Activated CD8-positive, alpha-beta T cell treated with anti-CD3 and anti-CD28 coated beads for 36 hours (primary cell): ENCODE measurements at regions of chr7 and their contacts with region 1.

Region 1: DNA sequence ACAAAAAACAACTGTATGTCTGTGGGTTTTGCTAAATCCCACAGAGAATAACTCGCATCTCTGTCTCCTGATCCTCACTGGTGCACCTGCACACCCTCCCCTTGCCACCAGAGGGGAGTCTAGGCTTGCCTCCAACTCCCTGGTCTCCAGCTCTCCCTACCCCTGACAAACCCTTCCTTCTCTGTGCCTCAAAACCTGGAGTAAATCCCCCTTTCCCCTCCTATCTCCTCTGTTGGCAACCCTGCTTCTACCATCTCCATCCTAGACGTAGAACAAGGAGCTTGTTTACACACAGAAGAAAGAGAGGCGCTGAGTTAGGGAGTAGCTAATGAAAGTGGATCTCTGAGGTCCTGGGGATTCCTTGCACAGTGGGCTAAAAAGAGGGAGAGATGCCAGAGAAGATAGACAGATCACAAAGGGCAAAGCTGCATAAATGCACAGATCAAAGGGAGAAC is 6.0 kb downstream of the MBLAC1 start:
- DNase-seq: peak; percentile 78
- ATAC-seq: peak; percentile 82
- H3K4me3 Mint-ChIP-seq: no peak overlapping the region
- H3K27ac Mint-ChIP-seq: no peak overlapping the region
- H3K4me1 Mint-ChIP-seq: peaks cover 10% of the 10 kb centered on the region
- H3K27me3 Mint-ChIP-seq: no peaks in the 10 kb centered on the region
- CTCF ChIP-seq: peak; percentile 97

Region 2: GRCh38 chr7:100101016-100101862 is 31.5 kb before region 1 on chr7 and contains the starts of genes AP4M1 and MCM7:
- CTCF ChIA-PET with region 1: interaction called, 18 read pairs
- POLR2A ChIA-PET with region 1: interaction called, 43 read pairs
- intact Hi-C with region 1: no loop called
- DNase-seq: peak; percentile 99
- ATAC-seq: peak; percentile 91
- H3K4me3 Mint-ChIP-seq: peak within 1 kb of the TSS; percentile 91
- H3K27ac Mint-ChIP-seq: peak within 1 kb of the TSS; percentile 95
- H3K4me1 Mint-ChIP-seq: peaks cover 39% of the 10 kb centered on the region
- H3K27me3 Mint-ChIP-seq: no peaks in the 10 kb centered on the region
- CTCF ChIP-seq: no peak
- total RNA-seq, gene AP4M1: 9.8 to 10.9 TPM
- total RNA-seq, gene MCM7: 456 to 476 TPM

Region 3: GRCh38 chr7:100167921-100168323 is 35.2 kb after region 1 on chr7:
- CTCF ChIA-PET with region 1: interaction called, 12 read pairs
- POLR2A ChIA-PET with region 1: no interaction called
- intact Hi-C with region 1: no loop called
- DNase-seq: no peak
- ATAC-seq: no peak
- H3K4me3 Mint-ChIP-seq: peak overlapping the region; percentile 74
- H3K27ac Mint-ChIP-seq: peak overlapping the region; percentile 80
- H3K4me1 Mint-ChIP-seq: peaks cover 74% of the 10 kb centered on the region
- H3K27me3 Mint-ChIP-seq: peaks cover 10% of the 10 kb centered on the region
- CTCF ChIP-seq: no peak

Region 4: DNA sequence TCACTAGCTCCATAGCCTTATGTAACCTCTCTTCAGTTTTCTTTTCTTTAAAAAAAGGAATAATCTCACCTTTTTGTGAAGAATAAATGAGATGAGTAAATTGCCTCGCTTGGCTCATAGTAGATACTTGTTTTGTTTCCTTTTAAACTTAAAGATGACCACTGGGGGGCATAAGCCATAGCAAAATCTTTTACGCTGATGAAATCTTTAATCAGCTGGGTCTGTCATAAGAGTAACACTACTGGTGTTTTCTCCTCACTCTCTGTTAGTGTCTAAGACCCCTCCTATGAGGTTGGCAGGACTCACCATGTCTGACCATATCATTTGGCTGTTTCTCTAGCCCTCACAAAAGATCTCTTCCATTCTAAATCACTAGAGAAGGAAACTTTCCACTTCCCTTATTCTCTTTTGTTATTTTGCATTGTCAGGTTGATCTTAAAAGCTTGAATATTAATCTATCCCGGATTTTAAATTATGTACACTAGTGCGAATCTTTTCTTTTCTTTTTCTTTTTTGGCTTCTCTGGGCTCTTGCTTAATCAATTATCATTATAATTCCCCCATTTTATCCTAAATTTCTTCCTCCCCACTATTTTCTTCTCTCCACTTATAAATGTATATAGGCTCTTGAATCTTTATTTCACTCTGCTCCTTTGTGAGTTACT is 57.5 kb after region 1 on chr7:
- CTCF ChIA-PET with region 1: interaction called, 16 read pairs
- POLR2A ChIA-PET with region 1: no interaction called
- intact Hi-C with region 1: no loop called
- DNase-seq: no peak
- ATAC-seq: peak; percentile 90
- H3K4me3 Mint-ChIP-seq: no peak overlapping the region
- H3K27ac Mint-ChIP-seq: peak overlapping the region; percentile 80
- H3K4me1 Mint-ChIP-seq: peaks cover 31% of the 10 kb centered on the region
- H3K27me3 Mint-ChIP-seq: no peaks in the 10 kb centered on the region
- CTCF ChIP-seq: peak; percentile 70

Region 5: GRCh38 chr7:100215895-100216294 is 83.2 kb after region 1 on chr7:
- CTCF ChIA-PET with region 1: interaction called, 60 read pairs
- POLR2A ChIA-PET with region 1: interaction called, 3 read pairs
- intact Hi-C with region 1: no loop called
- DNase-seq: no peak
- ATAC-seq: no peak
- H3K4me3 Mint-ChIP-seq: no peak overlapping the region
- H3K27ac Mint-ChIP-seq: peak overlapping the region; percentile 44
- H3K4me1 Mint-ChIP-seq: peaks cover 57% of the 10 kb centered on the region
- H3K27me3 Mint-ChIP-seq: no peaks in the 10 kb centered on the region
- CTCF ChIP-seq: no peak

Region 6: DNA sequence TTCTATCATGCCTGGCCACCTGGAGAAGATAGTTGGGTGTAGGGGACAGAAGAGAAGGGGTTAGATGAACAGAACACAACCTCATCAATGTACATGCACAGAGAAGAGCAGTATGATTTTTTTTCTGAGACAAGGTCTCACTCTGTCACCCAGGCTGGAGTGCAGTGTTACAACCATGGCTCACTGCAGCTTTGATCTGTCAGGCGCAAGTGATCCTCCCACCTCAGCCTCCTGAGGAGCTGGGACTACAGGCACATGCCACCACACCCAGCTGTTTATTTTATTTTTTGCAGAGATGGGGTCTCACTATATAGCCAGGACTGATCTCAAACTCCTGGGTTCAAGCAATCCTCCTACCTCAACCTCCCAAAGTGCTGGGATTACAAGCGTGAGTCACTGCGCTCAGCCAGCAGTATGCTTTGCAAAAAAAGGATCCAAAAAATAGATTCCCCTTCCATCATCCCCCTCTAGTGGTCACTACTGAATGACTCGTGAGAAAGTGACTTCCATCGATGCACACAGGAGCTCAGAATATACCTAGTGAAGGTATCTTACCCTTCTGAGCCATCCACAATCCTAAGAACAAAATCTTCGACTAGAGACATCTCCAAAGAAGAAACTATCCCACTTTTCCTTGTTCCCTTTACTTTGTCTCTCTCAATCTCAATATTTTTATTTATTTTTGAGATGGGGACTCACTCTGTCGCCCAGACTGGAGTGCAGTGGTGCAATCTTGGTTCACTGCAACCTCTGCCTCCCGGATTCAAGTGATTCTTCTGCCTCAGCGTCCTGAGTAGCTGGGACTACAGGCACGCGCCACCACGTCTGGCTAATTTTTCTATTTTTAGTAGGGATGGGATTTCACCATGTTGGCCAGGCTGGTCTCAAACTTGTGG is 274.8 kb after region 1 on chr7:
- CTCF ChIA-PET with region 1: interaction called, 38 read pairs
- POLR2A ChIA-PET with region 1: interaction called, 5 read pairs
- intact Hi-C with region 1: loop called (anchors 10 kb)
- DNase-seq: peak; percentile 59
- ATAC-seq: peak; percentile 98
- H3K4me3 Mint-ChIP-seq: no peak overlapping the region
- H3K27ac Mint-ChIP-seq: no peak overlapping the region
- H3K4me1 Mint-ChIP-seq: peaks cover 6% of the 10 kb centered on the region
- H3K27me3 Mint-ChIP-seq: no peaks in the 10 kb centered on the region
- CTCF ChIP-seq: peak; percentile 65